ENCODE measurements at regions of chr5 and their contacts with region 1.

Region 1: DNA sequence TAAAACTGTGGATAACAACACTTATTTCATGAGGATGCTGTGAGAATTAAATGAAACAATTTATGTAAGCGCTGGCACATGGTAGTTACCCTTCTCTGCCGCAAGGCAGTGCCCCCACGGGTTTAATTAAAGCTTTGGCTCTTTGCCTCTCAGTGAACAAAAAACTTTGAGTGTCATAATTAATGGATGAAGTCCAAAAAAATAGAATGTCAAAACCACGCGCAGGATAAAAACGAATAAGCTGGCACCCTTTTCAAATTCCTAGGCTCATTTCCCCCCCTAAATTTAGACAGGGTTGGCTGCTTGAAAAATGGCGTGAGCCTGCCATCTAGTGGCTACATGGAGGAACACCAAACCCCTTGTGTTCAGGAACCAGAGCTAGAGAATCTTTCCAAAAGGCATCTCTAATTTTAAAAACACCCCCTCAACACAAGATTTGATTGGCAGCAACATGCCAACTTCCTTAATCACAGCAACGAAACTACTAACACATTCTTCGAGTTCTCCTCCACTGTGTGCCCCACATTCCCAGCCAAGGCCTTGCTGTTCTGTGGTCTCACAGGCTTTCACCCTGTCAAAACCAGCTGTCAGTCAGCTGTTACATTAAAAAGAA is 29.0 kb upstream of the CCNG1 start:
- DNase-seq: peak; percentile 49 to 54
- H3K4me3 ChIP-seq: no peak overlapping the region
- H3K27ac ChIP-seq: peak overlapping the region; percentile 65; the same call in 1 of the 2 replicates
- H3K4me1 ChIP-seq: peaks cover 30% of the 10 kb centered on the region
- H3K27me3 ChIP-seq: no peaks in the 10 kb centered on the region
- CTCF ChIP-seq: peak; percentile 95

Region 2: DNA sequence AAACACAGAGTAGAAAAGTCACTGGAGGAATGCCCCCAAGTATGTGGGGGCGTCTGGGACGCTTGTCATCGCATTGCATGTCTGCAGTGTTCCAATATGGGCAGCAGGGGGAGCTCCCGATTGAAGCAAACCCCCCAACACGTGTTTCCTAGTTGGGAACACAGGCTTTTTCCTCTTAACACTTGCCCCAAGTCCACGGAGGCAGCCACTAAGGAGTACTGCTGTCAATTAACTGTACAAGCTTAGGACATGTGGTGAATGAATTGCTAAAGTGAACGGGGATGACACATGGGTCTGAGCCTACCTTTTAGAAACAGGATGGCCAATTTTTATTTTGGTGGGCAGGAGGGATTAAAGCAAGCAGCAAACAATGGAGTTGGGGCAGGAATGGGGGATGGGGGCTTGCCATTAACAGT is 1864.1 kb before region 1 on chr5:
- CTCF ChIA-PET with region 1: no interaction called
- POLR2A ChIA-PET with region 1: no interaction called
- intact Hi-C with region 1: loop called (anchors 2 kb)
- DNase-seq: peak in 1 of 2 experiments; percentile 16
- H3K4me3 ChIP-seq: no peak overlapping the region
- H3K27ac ChIP-seq: no peak overlapping the region
- H3K4me1 ChIP-seq: no peaks in the 10 kb centered on the region
- H3K27me3 ChIP-seq: no peaks in the 10 kb centered on the region
- CTCF ChIP-seq: peak; percentile 80

Region 3: DNA sequence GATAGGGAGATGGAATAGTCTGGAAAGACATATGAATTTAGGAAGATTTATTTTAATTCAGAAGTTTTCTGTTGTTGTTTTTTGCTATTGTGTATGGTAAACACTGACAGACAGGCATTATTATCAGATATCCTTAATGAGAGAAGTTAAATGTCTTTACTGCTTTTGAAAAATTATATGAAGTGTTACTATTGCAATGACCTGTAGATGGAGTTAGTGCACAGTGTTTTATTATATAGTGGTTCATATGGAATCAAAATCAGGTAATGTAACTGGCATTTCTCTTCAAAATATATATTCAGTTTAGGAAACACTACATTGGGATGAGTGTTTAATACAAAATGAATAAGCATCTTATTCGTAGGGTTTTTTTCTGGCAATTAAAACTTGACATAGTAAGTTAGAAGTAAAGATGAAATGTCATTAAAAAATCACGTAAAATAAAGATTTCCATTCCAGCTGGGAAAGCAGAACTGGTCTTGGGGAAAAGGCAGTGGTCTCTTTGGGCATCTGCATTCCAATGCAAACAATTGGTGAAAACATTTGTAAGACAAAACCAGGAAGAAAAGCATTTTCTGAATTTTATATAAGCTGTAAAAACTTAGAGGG is 1556.6 kb before region 1 on chr5:
- CTCF ChIA-PET with region 1: no interaction called
- POLR2A ChIA-PET with region 1: no interaction called
- intact Hi-C with region 1: loop called (anchors 10 kb)
- DNase-seq: no peak
- H3K4me3 ChIP-seq: no peak overlapping the region
- H3K27ac ChIP-seq: no peak overlapping the region
- H3K4me1 ChIP-seq: no peaks in the 10 kb centered on the region
- H3K27me3 ChIP-seq: no peaks in the 10 kb centered on the region
- CTCF ChIP-seq: peak; percentile 56

Region 4: DNA sequence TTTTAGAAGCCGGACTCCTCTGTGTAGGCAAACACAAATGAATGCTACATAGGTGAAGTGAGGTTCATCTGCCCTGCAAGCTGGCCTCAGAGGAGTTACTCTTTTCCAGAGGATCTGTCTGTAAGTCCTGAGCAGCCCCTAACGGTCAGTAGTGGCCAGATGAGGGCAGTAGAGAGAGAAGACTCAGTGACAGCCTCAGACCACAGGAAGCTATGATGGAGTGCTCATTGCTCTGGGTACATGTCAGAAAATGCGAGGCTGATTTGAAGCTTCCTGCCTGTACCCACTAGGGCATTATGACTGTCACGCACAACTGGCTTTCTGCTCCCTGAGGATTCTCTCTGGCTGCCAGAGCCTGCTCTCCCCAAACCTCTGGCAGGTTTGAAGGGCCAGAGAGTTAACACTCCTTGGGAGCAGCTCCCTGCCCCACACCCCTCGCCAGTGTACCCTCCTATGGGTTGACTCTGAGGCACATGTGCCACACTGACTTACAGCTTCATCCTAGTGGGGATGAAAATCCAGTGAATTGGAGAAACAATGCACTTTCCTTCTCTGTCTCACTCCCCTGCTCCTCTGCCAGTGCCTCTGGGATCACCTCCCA is 1199.3 kb before region 1 on chr5:
- CTCF ChIA-PET with region 1: interaction called, 3 read pairs
- POLR2A ChIA-PET with region 1: no interaction called
- intact Hi-C with region 1: loop called (anchors 5 kb)
- DNase-seq: peak in 1 of 2 experiments; percentile 24
- H3K4me3 ChIP-seq: no peak overlapping the region
- H3K27ac ChIP-seq: no peak overlapping the region
- H3K4me1 ChIP-seq: no peaks in the 10 kb centered on the region
- H3K27me3 ChIP-seq: no peaks in the 10 kb centered on the region
- CTCF ChIP-seq: peak; percentile 54

Region 5: GRCh38 chr5:163306421-163306820 is 102.0 kb before region 1 on chr5:
- CTCF ChIA-PET with region 1: no interaction called
- POLR2A ChIA-PET with region 1: no interaction called
- intact Hi-C with region 1: loop called (anchors 2 kb)
- DNase-seq: no peak
- H3K4me3 ChIP-seq: no peak overlapping the region
- H3K27ac ChIP-seq: no peak overlapping the region
- H3K4me1 ChIP-seq: no peaks in the 10 kb centered on the region
- H3K27me3 ChIP-seq: peaks cover 8% of the 10 kb centered on the region
- CTCF ChIP-seq: peak; percentile 59

Region 6: GRCh38 chr5:163347671-163348070 is 60.7 kb before region 1 on chr5:
- CTCF ChIA-PET with region 1: interaction called, 3 read pairs
- POLR2A ChIA-PET with region 1: no interaction called
- intact Hi-C with region 1: loop called (anchors 1 kb)
- DNase-seq: peak in 1 of 2 experiments; percentile 37
- H3K4me3 ChIP-seq: no peak overlapping the region
- H3K27ac ChIP-seq: no peak overlapping the region
- H3K4me1 ChIP-seq: peaks cover 10% of the 10 kb centered on the region
- H3K27me3 ChIP-seq: no peaks in the 10 kb centered on the region
- CTCF ChIP-seq: peak; percentile 92

Region 7: GRCh38 chr5:163437309-163438182 is 29.1 kb after region 1 on chr5 and contains the start of gene CCNG1:
- CTCF ChIA-PET with region 1: interaction called, 3 read pairs
- POLR2A ChIA-PET with region 1: interaction called, 32 read pairs
- intact Hi-C with region 1: no loop called
- DNase-seq: peak; percentile 91 to 95
- H3K4me3 ChIP-seq: peak within 1 kb of the TSS; percentile 85
- H3K27ac ChIP-seq: peak within 1 kb of the TSS; percentile 56
- H3K4me1 ChIP-seq: peaks cover 28% of the 10 kb centered on the region
- H3K27me3 ChIP-seq: no peaks in the 10 kb centered on the region
- CTCF ChIP-seq: no peak
- total RNA-seq, gene CCNG1: 112 and 170 TPM in 2 replicates

Measured in PC-9 (cell line).